ENCODE measurements at regions of chr7 and their contacts with region 1.

Region 1: DNA sequence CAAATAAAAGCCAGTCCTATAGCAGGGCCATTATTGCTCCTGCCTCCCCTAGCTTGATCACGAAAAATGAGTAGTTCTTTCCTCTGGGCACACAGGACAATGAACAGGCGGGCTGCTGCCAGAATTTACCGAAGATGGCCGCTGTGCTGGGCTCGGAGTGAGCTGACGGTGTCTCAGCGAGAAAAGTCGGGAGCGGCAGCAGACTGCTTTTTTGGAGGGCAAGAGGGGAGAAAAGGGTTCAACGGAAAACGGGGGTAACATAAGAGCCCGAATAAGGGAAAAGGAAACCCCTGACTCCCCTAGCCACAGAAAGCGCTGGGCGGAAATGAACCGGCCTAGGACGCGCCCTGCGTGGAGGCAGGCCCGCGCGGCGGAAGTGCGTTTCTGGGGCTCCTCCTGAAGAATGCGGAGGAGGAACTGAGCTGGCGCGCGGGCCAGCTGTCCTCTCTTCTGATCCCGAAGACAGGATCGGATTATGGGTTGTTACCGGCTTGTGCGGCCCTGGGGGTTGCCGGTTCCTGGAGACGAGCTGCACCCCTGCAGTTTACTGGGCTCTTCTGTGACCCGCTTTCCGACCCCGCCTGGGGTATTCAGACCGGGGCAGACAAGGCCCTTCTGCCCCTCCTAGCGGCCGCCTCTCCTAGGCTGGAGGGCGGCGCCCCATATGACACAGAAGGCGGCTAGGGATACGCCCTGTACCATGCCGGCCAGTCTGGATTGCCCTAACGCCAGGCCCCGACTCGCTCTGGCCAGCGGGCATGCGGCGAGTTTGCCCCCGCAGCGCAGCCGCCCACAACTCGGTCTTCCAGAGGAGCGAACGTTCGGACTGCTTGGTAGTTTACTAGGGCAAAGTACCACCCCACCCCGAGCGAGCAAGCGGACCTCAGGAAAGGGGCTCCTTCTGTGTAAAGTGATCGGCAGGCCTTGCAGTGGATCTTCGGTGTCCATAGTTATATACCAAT is 30.1 kb upstream of the KMT2E start:
- DNase-seq: peak; percentile 84 to 91 (median 86)
- H3K4me3 ChIP-seq: peak overlapping the region; percentile 47 to 92
- H3K4me3 Mint-ChIP-seq: peak overlapping the region; percentile 97 to 100 (median 100)
- H3K27ac ChIP-seq: peak overlapping the region; percentile 98
- H3K27ac Mint-ChIP-seq: peak overlapping the region in 6 of 7 donors; percentile 99 to 100 (median 100)
- H3K4me1 ChIP-seq: peaks cover 37% of the 10 kb centered on the region
- H3K4me1 Mint-ChIP-seq: peaks cover 33 to 63% (median 42%) of the 10 kb centered on the region in 4 donors
- H3K27me3 ChIP-seq: no peaks in the 10 kb centered on the region
- H3K27me3 Mint-ChIP-seq: no peaks in the 10 kb centered on the region

Region 2: DNA sequence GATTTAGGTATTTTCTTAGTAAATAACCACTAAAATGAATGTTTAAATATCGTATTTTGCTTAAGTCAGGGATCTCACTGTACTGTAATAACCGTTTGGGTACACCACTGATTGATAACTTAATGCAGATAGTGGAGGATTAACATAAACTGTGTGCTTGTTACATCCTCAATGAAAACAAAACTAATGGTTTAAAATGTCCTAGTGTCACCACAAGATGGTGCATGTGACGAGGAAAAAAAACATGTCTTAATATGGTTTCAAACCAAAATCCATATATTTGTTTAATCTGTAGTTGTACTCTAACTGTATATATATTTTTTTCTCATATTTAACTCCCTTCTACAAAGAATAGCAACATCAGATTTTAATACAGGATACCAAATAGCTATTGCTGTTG is 1889.8 kb before region 1 on chr7:
- CTCF ChIA-PET with region 1: no interaction called
- POLR2A ChIA-PET with region 1: no interaction called
- intact Hi-C with region 1: no loop called
- DNase-seq: no peak
- H3K4me3 ChIP-seq: no peak overlapping the region
- H3K4me3 Mint-ChIP-seq: no peak overlapping the region
- H3K27ac ChIP-seq: no peak overlapping the region
- H3K27ac Mint-ChIP-seq: peak overlapping the region in 2 of 7 donors; percentile 62 to 64
- H3K4me1 ChIP-seq: no peaks in the 10 kb centered on the region
- H3K4me1 Mint-ChIP-seq: peaks cover 0 to 5% (median 1%) of the 10 kb centered on the region in 4 donors
- H3K27me3 ChIP-seq: no peaks in the 10 kb centered on the region
- H3K27me3 Mint-ChIP-seq: no peaks in the 10 kb centered on the region

Region 3: DNA sequence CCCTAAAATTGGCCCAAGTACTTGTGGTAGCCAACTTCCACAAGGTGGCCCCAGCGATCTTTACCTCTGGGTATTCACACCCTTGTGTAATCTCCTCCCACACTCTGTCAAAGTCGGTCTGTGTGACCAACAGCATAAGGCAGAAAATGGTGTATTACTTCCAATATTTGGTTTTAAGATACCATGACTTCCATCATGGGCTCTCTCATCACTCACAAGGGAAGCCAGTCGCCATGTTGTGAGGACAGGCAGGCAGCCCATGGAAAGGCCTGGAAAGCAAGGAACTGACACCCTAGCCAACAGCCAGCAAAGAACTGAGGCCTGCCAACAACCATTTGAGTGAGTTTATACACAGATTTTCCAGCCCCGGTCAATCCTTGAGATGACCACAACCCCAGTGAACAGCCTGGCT is 60.8 kb before region 1 on chr7:
- CTCF ChIA-PET with region 1: interaction called, 19 read pairs
- POLR2A ChIA-PET with region 1: interaction called, 6 read pairs
- intact Hi-C with region 1: loop called (anchors 1 kb)
- DNase-seq: peak; percentile 63 to 79 (median 67)
- H3K4me3 ChIP-seq: no peak overlapping the region
- H3K4me3 Mint-ChIP-seq: no peak overlapping the region
- H3K27ac ChIP-seq: no peak overlapping the region
- H3K27ac Mint-ChIP-seq: peak overlapping the region in 5 of 7 donors; percentile 42 to 83 (median 62)
- H3K4me1 ChIP-seq: peaks cover 6% of the 10 kb centered on the region
- H3K4me1 Mint-ChIP-seq: peaks cover 0 to 6% (median 4%) of the 10 kb centered on the region in 4 donors
- H3K27me3 ChIP-seq: no peaks in the 10 kb centered on the region
- H3K27me3 Mint-ChIP-seq: no peaks in the 10 kb centered on the region

Region 4: GRCh38 chr7:105013221-105013815 is 29.5 kb after region 1 on chr7:
- CTCF ChIA-PET with region 1: interaction called, 160 read pairs
- POLR2A ChIA-PET with region 1: interaction called, 760 read pairs
- intact Hi-C with region 1: loop called (anchors 1 kb)
- DNase-seq: peak; percentile 95 to 97 (median 97)
- H3K4me3 ChIP-seq: peak overlapping the region; percentile 87 to 99
- H3K4me3 Mint-ChIP-seq: peak overlapping the region; percentile 94 to 100 (median 98)
- H3K27ac ChIP-seq: peak overlapping the region; percentile 100
- H3K27ac Mint-ChIP-seq: peak overlapping the region; percentile 99 to 100 (median 100)
- H3K4me1 ChIP-seq: peaks cover 56% of the 10 kb centered on the region
- H3K4me1 Mint-ChIP-seq: peaks cover 22 to 90% (median 38%) of the 10 kb centered on the region in 4 donors
- H3K27me3 ChIP-seq: no peaks in the 10 kb centered on the region
- H3K27me3 Mint-ChIP-seq: peaks cover 0 to 9% of the 10 kb centered on the region in 2 donors

Region 5: DNA sequence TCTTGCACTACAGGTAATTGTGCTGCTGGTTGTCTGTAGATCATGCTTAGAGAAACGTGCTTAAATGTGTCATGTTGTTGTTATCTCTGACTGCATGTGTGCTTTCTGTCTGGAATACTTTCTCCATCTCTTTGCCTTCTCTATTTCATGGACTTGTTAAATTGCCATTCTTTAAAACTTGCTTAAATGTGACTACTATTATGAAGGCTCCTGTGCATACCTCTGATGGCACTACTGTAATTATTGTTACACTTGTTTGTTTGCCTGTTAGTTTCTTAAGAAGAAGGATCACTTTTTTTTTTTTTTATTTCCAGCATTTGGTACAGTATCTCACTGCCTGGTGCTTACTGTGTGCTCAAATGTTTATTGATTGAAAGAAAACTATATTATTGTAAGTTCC is 71.8 kb after region 1 on chr7:
- CTCF ChIA-PET with region 1: interaction called, 63 read pairs
- POLR2A ChIA-PET with region 1: interaction called, 5 read pairs
- intact Hi-C with region 1: loop called (anchors 5 kb)
- DNase-seq: no peak
- H3K4me3 ChIP-seq: no peak overlapping the region
- H3K4me3 Mint-ChIP-seq: peak overlapping the region in 4 of 8 donors; percentile 7 to 61 (median 38)
- H3K27ac ChIP-seq: no peak overlapping the region
- H3K27ac Mint-ChIP-seq: peak overlapping the region in 6 of 7 donors; percentile 24 to 84 (median 68)
- H3K4me1 ChIP-seq: peaks cover 80% of the 10 kb centered on the region
- H3K4me1 Mint-ChIP-seq: peaks cover 53 to 90% (median 71%) of the 10 kb centered on the region in 4 donors
- H3K27me3 ChIP-seq: no peaks in the 10 kb centered on the region
- H3K27me3 Mint-ChIP-seq: no peaks in the 10 kb centered on the region

Region 6: GRCh38 chr7:105112440-105113418 is 128.9 kb after region 1 on chr7:
- CTCF ChIA-PET with region 1: interaction called, 11 read pairs
- POLR2A ChIA-PET with region 1: no interaction called
- intact Hi-C with region 1: no loop called
- DNase-seq: no peak
- H3K4me3 ChIP-seq: no peak overlapping the region
- H3K4me3 Mint-ChIP-seq: peak overlapping the region in 3 of 8 donors; percentile 43 to 57 (median 49)
- H3K27ac ChIP-seq: no peak overlapping the region
- H3K27ac Mint-ChIP-seq: peak overlapping the region; percentile 73 to 87 (median 82)
- H3K4me1 ChIP-seq: no peaks in the 10 kb centered on the region
- H3K4me1 Mint-ChIP-seq: peaks cover 5 to 11% (median 9%) of the 10 kb centered on the region in 4 donors
- H3K27me3 ChIP-seq: no peaks in the 10 kb centered on the region
- H3K27me3 Mint-ChIP-seq: no peaks in the 10 kb centered on the region

Region 7: DNA sequence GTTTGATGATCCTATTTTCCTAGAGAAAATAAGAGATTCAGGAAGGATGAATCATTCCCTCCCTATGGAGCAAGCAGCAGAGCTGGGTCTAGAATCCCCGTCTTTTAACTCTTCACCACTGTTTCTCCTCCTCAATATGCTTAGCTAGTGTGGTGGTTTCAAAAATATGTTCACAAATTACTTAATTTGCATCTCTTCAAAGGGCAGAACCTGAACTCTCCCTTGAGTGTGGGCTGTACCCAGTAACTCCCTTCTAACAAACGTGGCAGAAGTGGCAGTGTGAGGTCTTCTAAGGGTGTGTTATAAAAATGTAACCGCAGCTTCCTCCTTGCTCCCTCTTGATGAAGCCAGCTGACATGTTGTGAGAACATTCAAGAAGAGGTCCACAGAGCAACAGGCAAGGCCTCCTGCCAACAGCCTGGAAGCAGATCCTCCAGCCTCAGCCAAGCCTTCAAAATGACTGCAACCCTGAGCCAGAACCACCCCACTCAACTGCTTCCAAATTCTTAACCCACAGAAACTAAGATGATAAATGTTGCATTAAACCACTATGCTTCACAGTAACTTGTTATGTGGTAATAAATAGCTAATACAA is 368.3 kb after region 1 on chr7:
- CTCF ChIA-PET with region 1: interaction called, 3 read pairs
- POLR2A ChIA-PET with region 1: interaction called, 9 read pairs
- intact Hi-C with region 1: loop called (anchors 5 kb)
- DNase-seq: peak; percentile 81 to 87 (median 82)
- H3K4me3 ChIP-seq: no peak overlapping the region
- H3K4me3 Mint-ChIP-seq: peak overlapping the region; percentile 78 to 89 (median 84)
- H3K27ac ChIP-seq: peak overlapping the region; percentile 49
- H3K27ac Mint-ChIP-seq: peak overlapping the region; percentile 80 to 97 (median 96)
- H3K4me1 ChIP-seq: peaks cover 84% of the 10 kb centered on the region
- H3K4me1 Mint-ChIP-seq: peaks cover 47 to 74% (median 59%) of the 10 kb centered on the region in 4 donors
- H3K27me3 ChIP-seq: no peaks in the 10 kb centered on the region
- H3K27me3 Mint-ChIP-seq: no peaks in the 10 kb centered on the region

Region 8: DNA sequence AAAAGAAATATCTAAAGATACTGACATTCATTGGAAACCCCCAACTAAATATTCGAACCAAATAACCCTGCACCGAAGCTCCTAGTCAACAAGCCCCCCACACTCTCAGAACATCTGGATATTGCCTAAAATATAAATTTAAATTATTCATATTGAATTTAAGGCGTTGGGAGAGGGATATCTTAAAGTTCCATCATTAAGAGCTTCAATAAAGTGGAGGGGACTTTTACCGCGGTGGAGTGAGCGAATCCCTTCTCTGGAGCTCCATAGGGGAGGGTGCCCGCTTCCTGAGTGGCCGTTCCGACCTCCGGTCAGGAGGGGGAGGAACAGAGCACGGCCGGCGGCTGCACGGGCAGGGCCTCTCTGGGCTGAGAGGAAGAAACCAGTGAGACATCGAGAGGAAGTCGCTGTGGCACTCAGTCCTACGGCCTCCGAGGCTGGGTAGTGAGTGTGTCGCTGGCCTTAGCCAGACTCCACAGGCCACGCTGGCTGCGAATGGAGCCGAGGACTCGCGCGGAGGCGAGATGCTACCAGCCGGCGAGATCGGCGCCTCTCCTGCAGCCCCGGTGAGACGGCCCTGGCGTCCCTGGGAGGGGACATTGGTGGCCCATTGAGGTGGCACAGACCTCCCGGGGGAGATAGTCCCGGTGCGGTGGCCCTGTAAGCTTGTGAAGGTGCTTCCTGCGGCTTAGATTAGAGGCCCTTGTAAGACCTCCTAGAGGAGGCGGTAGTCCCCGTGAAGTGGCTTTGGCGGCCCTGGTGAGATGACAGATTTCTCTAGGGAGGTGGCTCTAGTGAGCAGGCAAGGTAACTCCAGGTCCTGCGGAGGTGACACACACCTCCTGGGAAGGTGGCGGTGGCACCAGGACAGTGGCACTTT is 548.2 kb after region 1 on chr7 and contains the start of gene RINT1:
- CTCF ChIA-PET with region 1: interaction called, 7 read pairs
- POLR2A ChIA-PET with region 1: interaction called, 9 read pairs
- intact Hi-C with region 1: loop called (anchors 1 kb)
- DNase-seq: peak; percentile 86 to 88 (median 87)
- H3K4me3 ChIP-seq: peak within 1 kb of the TSS; percentile 93 to 94
- H3K4me3 Mint-ChIP-seq: peak within 1 kb of the TSS; percentile 85 to 98 (median 92)
- H3K27ac ChIP-seq: peak within 1 kb of the TSS; percentile 77
- H3K27ac Mint-ChIP-seq: peak within 1 kb of the TSS; percentile 73 to 98 (median 97)
- H3K4me1 ChIP-seq: peaks cover 23% of the 10 kb centered on the region
- H3K4me1 Mint-ChIP-seq: peaks cover 16 to 50% (median 30%) of the 10 kb centered on the region in 4 donors
- H3K27me3 ChIP-seq: no peaks in the 10 kb centered on the region
- H3K27me3 Mint-ChIP-seq: no peaks in the 10 kb centered on the region
- total RNA-seq, gene RINT1: 25.7 to 26.5 TPM